Caco-2 (cell line): ENCODE measurements at regions of chr7 and their contacts with region 1.

Region 1: GRCh38 chr7:76291343-76292212 is 10.9 kb upstream of the HSPB1 start:
- DNase-seq: peak; percentile 92 to 93
- H3K4me3 ChIP-seq: peak overlapping the region; percentile 18; the same call in 1 of the 2 replicates
- H3K4me3 Mint-ChIP-seq: peak overlapping the region; percentile 17
- H3K27ac Mint-ChIP-seq: peak overlapping the region; percentile 36
- H3K4me1 ChIP-seq: peaks cover 33% of the 10 kb centered on the region
- H3K4me1 Mint-ChIP-seq: peaks cover 22% of the 10 kb centered on the region
- H3K27me3 ChIP-seq: no peaks in the 10 kb centered on the region
- H3K27me3 Mint-ChIP-seq: no peaks in the 10 kb centered on the region
- CTCF ChIP-seq: peak; percentile 97 to 98

Region 2: GRCh38 chr7:76201730-76202665 is 89.6 kb before region 1 on chr7 and contains the start of gene SRRM3:
- CTCF ChIA-PET with region 1: no interaction called
- POLR2A ChIA-PET with region 1: no interaction called
- intact Hi-C with region 1: no loop called
- DNase-seq: peak; percentile 83 to 95
- H3K4me3 ChIP-seq: peak within 1 kb of the TSS; percentile 39
- H3K4me3 Mint-ChIP-seq: peak within 1 kb of the TSS; percentile 49
- H3K27ac Mint-ChIP-seq: no peak within 1 kb of the TSS
- H3K4me1 ChIP-seq: no peaks in the 10 kb centered on the region; the same call in 1 of the 2 replicates
- H3K4me1 Mint-ChIP-seq: no peaks in the 10 kb centered on the region
- H3K27me3 ChIP-seq: no peaks in the 10 kb centered on the region
- H3K27me3 Mint-ChIP-seq: peaks cover 9% of the 10 kb centered on the region
- CTCF ChIP-seq: peak; percentile 57 to 87
- total RNA-seq, gene SRRM3: 0.86 and 1.7 TPM in 2 replicates

Region 3: GRCh38 chr7:76230214-76230613 is 61.4 kb before region 1 on chr7:
- CTCF ChIA-PET with region 1: no interaction called
- POLR2A ChIA-PET with region 1: no interaction called
- intact Hi-C with region 1: no loop called
- DNase-seq: no peak
- H3K4me3 ChIP-seq: no peak overlapping the region
- H3K4me3 Mint-ChIP-seq: no peak overlapping the region
- H3K27ac Mint-ChIP-seq: no peak overlapping the region
- H3K4me1 ChIP-seq: no peaks in the 10 kb centered on the region
- H3K4me1 Mint-ChIP-seq: no peaks in the 10 kb centered on the region
- H3K27me3 ChIP-seq: no peaks in the 10 kb centered on the region
- H3K27me3 Mint-ChIP-seq: peaks cover 12% of the 10 kb centered on the region
- CTCF ChIP-seq: no peak

Region 4: DNA sequence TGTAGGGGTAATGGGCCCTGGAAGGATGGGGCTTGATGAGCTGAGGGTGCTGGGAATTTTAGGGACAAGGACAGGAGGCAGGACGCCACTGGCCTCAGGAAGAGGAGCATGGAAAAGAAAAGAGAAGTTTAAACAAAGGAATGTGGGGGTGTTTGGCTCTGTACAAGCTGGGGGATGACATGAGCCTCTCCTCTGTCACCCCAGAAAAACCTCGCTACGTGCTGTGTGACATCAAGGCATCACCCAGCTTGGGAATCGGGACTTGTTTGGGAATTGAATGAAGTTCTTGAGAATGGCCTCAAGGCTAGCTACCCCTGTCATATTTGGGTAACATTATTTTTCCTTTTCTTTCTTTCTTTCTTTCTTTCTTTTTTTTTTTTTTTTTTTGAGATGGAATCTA is 36.8 kb before region 1 on chr7:
- CTCF ChIA-PET with region 1: no interaction called
- POLR2A ChIA-PET with region 1: no interaction called
- intact Hi-C with region 1: no loop called
- DNase-seq: no peak
- H3K4me3 ChIP-seq: no peak overlapping the region
- H3K4me3 Mint-ChIP-seq: no peak overlapping the region
- H3K27ac Mint-ChIP-seq: no peak overlapping the region
- H3K4me1 ChIP-seq: no peaks in the 10 kb centered on the region
- H3K4me1 Mint-ChIP-seq: no peaks in the 10 kb centered on the region
- H3K27me3 ChIP-seq: no peaks in the 10 kb centered on the region
- H3K27me3 Mint-ChIP-seq: no peaks in the 10 kb centered on the region
- CTCF ChIP-seq: no peak

Region 5: DNA sequence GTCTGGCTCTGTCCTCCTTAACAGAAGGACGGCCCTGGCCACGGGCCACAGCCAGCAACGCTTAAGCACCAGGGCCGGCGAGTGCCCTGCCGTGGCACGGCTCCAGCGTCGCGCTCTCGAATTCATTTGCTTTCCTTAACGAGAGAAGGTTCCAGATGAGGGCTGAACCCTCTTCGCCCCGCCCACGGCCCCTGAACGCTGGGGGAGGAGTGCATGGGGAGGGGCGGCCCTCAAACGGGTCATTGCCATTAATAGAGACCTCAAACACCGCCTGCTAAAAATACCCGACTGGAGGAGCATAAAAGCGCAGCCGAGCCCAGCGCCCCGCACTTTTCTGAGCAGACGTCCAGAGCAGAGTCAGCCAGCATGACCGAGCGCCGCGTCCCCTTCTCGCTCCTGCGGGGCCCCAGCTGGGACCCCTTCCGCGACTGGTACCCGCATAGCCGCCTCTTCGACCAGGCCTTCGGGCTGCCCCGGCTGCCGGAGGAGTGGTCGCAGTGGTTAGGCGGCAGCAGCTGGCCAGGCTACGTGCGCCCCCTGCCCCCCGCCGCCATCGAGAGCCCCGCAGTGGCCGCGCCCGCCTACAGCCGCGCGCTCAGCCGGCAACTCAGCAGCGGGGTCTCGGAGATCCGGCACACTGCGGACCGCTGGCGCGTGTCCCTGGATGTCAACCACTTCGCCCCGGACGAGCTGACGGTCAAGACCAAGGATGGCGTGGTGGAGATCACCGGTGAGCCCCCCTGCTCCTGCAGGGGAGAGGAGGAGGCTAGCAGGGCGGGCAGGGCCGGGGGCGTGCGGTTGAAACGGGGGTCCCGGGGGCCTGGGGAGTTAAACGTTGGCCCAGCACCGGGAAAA is 11.0 kb after region 1 on chr7 and contains the start of gene HSPB1:
- CTCF ChIA-PET with region 1: interaction called, 5 read pairs
- POLR2A ChIA-PET with region 1: no interaction called
- intact Hi-C with region 1: loop called (anchors 1 kb)
- DNase-seq: peak; percentile 82 to 86
- H3K4me3 ChIP-seq: peak within 1 kb of the TSS; percentile 77
- H3K4me3 Mint-ChIP-seq: peak within 1 kb of the TSS; percentile 91
- H3K27ac Mint-ChIP-seq: peak within 1 kb of the TSS; percentile 77
- H3K4me1 ChIP-seq: peaks cover 18% of the 10 kb centered on the region
- H3K4me1 Mint-ChIP-seq: peaks cover 6% of the 10 kb centered on the region
- H3K27me3 ChIP-seq: no peaks in the 10 kb centered on the region
- H3K27me3 Mint-ChIP-seq: no peaks in the 10 kb centered on the region
- CTCF ChIP-seq: no peak
- total RNA-seq, gene HSPB1: 82.1 and 89.1 TPM in 2 replicates

Region 6: GRCh38 chr7:76333511-76334101 is 42.0 kb after region 1 on chr7:
- CTCF ChIA-PET with region 1: no interaction called
- POLR2A ChIA-PET with region 1: no interaction called
- intact Hi-C with region 1: no loop called
- DNase-seq: no peak
- H3K4me3 ChIP-seq: no peak overlapping the region
- H3K4me3 Mint-ChIP-seq: no peak overlapping the region
- H3K27ac Mint-ChIP-seq: no peak overlapping the region
- H3K4me1 ChIP-seq: no peaks in the 10 kb centered on the region
- H3K4me1 Mint-ChIP-seq: peaks cover 19% of the 10 kb centered on the region
- H3K27me3 ChIP-seq: no peaks in the 10 kb centered on the region
- H3K27me3 Mint-ChIP-seq: no peaks in the 10 kb centered on the region
- CTCF ChIP-seq: no peak